WTC11 (cell line): ENCODE measurements at regions of chr9 and their contacts with region 1.

Region 1: DNA sequence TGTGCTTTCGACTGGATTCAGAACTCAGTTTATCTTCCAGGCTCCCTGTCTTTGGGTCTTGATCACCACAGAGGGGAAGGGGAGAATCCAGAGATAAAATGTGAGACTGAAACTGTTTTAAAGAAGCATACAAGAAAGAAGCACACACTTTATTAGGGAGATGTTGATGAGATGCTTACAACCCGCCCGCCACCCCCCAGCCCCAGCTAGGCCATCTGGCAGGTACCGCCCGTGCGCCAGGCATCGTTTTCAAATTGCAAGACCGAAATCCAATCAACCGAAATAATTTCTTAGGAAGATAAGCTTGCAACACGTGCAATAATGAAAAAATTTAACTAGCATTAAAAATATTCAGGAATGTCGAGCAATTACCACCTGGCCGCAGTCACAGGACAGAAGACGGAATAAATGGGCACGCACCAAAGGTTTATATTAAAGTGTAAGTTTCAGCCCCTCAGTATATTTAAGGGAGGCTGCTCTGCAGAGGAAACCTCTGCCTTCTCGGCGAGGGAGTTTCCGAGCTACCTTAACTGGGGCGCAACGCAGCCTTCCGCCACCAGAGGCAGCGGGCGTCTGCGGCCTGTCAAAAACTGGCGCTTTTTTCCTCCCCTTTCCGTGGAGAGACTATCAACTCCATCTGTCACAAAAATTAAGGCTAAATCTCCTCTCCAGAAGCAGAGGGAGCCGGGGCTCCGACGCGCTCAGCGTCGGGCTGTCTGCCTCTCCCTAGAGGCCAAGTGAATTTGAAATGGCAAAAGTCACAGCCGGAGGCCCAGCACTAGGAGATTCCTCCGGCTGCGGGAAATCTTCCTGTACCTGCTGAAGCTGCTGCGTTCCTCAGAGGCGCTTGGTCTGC is 996 bp upstream of the GAS1 start:
- DNase-seq: peak; percentile 80
- ATAC-seq: peak; percentile 26
- H3K4me3 Mint-ChIP-seq: peak overlapping the region; percentile 82
- H3K27ac Mint-ChIP-seq: no peak overlapping the region
- H3K4me1 Mint-ChIP-seq: peaks cover 34% of the 10 kb centered on the region
- H3K27me3 Mint-ChIP-seq: peaks cover 53% of the 10 kb centered on the region
- CTCF ChIP-seq: peak; percentile 69

Region 2: DNA sequence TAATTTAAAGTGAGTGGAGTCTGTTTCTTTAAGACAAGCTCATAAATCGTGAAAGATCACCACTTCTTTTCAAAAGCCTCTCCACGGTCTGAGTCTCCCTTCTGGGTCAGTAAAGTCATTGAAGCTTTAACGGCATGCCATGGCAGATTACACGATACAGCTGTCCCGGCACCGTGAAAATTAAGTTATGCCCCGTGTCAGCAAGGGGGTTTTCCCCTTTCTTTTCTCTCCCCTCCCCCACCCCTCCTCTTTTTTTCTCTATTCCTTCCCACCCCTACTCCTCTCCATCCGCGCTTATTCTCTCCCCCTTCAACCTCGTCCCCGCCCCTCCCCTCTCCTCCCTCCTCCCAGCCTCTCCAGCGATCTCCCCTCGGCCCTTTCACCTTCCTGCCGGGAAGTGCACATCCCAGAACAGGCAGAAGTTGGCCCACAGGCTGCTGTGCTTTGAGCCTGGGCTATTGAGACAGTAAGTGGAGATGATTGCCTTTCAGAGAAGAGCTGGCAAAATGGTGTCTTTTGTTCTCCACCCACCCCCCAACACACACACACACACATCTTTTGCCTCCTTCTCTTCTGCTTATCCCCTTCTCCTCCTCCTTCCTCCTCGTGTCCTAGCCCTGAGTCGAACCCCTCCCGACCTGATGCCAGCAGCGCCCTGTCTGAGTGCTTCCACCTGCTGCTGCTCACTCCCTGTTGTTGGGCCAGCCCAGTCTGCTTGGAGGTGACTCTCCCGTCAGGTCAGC is 45.1 kb before region 1 on chr9:
- CTCF ChIA-PET with region 1: interaction called, 11 read pairs
- POLR2A ChIA-PET with region 1: interaction called, 6 read pairs
- DNase-seq: peak; percentile 57
- ATAC-seq: peak; percentile 84
- H3K4me3 Mint-ChIP-seq: peak overlapping the region; percentile 85
- H3K27ac Mint-ChIP-seq: no peak overlapping the region
- H3K4me1 Mint-ChIP-seq: peaks cover 49% of the 10 kb centered on the region
- H3K27me3 Mint-ChIP-seq: peaks cover 59% of the 10 kb centered on the region
- CTCF ChIP-seq: no peak

Region 3: DNA sequence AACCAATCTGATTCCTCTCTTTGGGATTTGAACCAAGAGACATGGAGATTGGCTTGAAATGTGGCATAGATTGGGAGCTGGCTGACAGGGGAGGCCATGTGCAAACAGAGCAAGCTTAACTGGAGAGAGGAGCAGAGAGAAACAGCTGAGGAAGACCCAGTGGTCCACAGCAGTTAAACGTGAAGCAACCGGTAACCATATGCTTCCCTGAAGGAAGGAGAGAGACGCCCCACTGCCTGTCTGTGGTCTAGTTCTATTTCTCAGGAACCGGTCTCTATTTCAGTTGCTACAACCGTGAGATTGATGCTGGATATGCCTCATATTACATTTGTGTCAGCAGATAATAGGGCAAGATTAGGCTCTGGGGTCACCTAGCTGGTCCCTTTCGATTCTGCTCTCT is 12.6 kb after region 1 on chr9:
- CTCF ChIA-PET with region 1: interaction called, 13 read pairs
- POLR2A ChIA-PET with region 1: no interaction called
- DNase-seq: no peak
- ATAC-seq: no peak
- H3K4me3 Mint-ChIP-seq: no peak overlapping the region
- H3K27ac Mint-ChIP-seq: no peak overlapping the region
- H3K4me1 Mint-ChIP-seq: 0 out of 2 replicates have a peak, but pooled peaks cover 3% of the 10 kb centered on the region
- H3K27me3 Mint-ChIP-seq: no peaks in the 10 kb centered on the region
- CTCF ChIP-seq: no peak

Region 4: DNA sequence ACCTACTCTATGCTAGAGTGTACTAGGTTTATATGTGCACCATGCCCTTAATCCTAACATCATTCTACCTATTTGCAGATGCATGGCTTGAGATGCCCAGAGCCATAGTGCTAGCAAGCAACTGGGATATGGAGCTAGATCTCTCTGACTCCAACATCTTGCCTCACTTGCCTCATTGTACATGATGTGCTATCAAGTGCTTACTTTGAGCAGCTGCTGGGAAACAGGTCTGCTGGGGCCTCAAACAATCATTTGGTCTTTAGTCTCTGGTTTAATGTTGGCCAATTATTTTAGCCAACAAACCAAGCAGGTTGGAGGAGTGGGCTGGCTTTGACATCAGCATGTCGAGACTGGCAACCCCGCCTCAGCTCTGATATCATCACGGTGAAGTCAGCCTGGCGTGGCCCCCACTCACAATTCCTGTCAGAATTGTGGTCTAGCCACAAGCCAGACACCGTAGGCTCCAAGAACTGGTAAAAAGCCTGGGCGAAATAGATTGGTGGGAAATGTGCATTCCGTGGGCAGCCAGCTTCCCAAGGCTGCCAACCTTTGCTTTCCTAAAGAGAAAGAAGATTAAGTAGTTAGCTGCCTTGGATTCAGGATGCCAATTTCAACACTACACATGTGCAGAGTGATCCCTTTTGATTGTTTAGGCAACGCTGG is 20.1 kb after region 1 on chr9:
- CTCF ChIA-PET with region 1: interaction called, 14 read pairs
- POLR2A ChIA-PET with region 1: no interaction called
- DNase-seq: no peak
- ATAC-seq: no peak
- H3K4me3 Mint-ChIP-seq: no peak overlapping the region
- H3K27ac Mint-ChIP-seq: no peak overlapping the region
- H3K4me1 Mint-ChIP-seq: peaks cover 9% of the 10 kb centered on the region
- H3K27me3 Mint-ChIP-seq: no peaks in the 10 kb centered on the region; the same call in 1 of the 2 replicates
- CTCF ChIP-seq: no peak